Upper lobe of right lung (tissue), 1 donor: ENCODE measurements at regions of chr4 and their contacts with region 1.

Region 1: DNA sequence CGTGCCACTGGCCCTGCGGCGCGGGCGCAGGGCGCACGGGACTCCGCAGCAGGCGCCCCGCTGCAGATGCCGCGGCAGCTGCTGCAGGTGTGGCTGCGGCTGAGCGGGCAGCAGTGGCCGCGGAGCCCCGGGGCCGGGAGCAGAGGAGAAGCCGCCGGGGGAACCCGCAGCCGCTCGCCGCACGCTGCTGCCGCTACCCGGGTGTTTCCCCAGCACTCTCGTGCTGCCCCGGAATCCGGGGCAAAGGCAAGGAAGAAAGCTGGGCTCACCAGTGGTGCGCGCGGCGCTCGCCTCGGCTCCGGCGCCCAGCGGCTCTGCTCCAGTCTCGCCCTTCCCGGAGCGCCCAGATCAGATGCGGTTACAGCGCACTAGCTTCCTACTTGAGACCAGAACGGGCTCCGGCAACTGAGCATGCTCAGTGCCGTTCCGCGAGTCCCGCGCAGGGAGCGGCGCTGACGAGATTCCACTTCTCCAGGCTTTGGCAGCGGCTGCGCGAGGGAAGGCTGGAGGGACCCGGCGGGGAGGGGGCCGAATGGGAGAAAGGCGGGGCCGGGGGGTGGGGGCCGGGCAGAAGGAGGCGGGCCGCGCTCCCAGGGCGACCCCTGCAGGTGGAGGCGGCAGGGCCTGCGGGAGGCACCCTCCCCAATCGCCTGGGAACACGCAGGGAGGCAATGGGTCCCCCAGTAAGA is at the start of gene APBB2:
- DNase-seq: peak; percentile 97
- ATAC-seq: peak; percentile 93
- H3K4me3 ChIP-seq: peak within 1 kb of the TSS; percentile 94
- H3K27ac ChIP-seq: peak within 1 kb of the TSS; percentile 92
- H3K4me1 ChIP-seq: peaks cover 16% of the 10 kb centered on the region
- H3K27me3 ChIP-seq: no peaks in the 10 kb centered on the region
- CTCF ChIP-seq: peak; percentile 90
- total RNA-seq, gene APBB2: 88.2 TPM

Region 2: GRCh38 chr4:40924096-40924792 is 290.0 kb before region 1 on chr4:
- intact Hi-C with region 1: loop called (anchors 5 kb)
- DNase-seq: peak; percentile 86
- ATAC-seq: peak; percentile 89
- H3K4me3 ChIP-seq: no peak overlapping the region
- H3K27ac ChIP-seq: peak overlapping the region; percentile 34
- H3K4me1 ChIP-seq: peaks cover 9% of the 10 kb centered on the region
- H3K27me3 ChIP-seq: no peaks in the 10 kb centered on the region
- CTCF ChIP-seq: peak; percentile 94

Region 3: DNA sequence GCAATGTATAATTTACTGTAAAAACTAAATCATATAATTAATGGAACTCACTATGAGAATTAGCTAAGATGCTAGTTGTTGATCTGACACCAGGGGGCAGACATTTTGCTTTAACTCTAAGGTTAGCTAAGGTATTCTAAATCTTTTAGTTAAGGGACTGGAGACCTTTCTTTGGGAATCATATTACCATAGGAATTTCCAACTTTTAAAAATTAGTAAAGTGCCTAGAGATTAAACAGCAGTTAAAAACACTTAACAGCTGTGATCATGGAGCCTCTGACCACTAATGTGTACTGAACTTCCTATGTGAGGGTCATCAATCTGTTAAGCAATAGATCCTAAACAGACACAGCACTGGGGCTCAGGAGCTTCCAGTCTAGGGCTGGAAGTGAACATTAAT is 237.9 kb before region 1 on chr4:
- intact Hi-C with region 1: loop called (anchors 10 kb)
- DNase-seq: no peak
- ATAC-seq: peak; percentile 69
- H3K4me3 ChIP-seq: no peak overlapping the region
- H3K27ac ChIP-seq: no peak overlapping the region
- H3K4me1 ChIP-seq: peaks cover 4% of the 10 kb centered on the region
- H3K27me3 ChIP-seq: no peaks in the 10 kb centered on the region
- CTCF ChIP-seq: peak; percentile 78

Region 4: DNA sequence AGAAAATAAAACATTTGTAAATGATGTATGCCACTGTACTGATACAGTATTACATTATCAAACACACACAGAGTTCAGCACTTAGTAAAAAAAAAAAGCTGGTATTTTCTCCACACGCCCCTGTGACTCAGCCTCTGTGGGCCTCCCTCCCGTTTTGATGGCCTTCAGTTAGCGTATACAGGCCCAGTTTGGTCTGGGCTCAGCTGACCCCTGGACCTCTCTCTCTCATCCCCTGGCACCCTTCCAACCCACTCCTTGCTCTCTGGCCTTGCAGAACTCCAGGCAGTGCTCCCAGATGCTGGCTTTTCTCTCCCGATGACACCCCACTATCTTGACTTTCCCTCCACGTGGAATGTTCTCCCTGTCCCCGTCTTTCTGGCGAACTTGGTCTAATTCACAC is 234.7 kb after region 1 on chr4:
- intact Hi-C with region 1: no loop called
- DNase-seq: no peak
- ATAC-seq: peak; percentile 36
- H3K4me3 ChIP-seq: no peak overlapping the region
- H3K27ac ChIP-seq: no peak overlapping the region
- H3K4me1 ChIP-seq: peaks cover 14% of the 10 kb centered on the region
- H3K27me3 ChIP-seq: no peaks in the 10 kb centered on the region
- CTCF ChIP-seq: no peak

Region 5: DNA sequence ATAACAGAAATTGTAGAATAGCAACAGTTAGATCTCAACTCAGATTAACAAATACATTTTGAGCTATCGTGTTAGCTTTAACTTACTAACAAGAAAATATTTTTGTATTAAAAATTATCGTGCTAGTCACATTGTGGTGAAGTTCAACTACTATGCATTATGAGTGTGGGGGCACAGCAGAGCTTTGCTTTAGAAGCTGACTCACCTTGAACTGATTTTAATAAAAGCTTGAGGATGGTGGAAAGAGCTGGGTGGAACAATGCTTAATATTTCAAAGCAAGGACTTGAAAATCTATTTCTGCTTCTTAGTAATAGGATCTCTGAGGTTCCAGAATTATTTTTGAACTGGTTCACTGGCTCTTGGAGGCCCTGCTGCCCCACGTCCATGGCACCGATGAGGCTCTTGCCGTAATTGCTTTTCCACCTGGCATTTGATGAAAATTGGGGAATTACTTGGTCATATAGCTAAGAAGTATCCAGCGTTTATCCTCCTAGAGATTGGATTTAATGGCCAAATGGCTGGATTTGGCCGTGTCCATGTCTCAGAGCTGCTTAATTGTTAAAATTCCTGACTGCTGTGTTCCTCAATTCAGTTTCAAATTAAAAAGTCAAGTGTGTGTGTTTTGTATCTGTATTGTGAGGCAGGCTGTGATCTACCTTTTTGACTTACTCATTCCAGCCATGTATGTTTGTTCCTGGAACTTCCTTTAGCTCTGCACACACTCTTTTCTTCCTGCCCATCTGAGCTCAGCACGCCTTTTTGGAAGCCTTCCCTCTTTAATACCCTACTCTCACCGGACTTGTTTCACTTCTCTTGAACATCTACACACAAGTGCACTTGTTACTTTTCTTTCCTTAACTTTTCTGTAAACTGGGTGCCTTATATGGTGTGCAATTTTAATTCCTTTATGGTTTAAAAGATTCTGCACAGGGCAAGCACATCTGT is 257.1 kb after region 1 on chr4:
- intact Hi-C with region 1: no loop called
- DNase-seq: no peak
- ATAC-seq: peak; percentile 61
- H3K4me3 ChIP-seq: no peak overlapping the region
- H3K27ac ChIP-seq: no peak overlapping the region
- H3K4me1 ChIP-seq: peaks cover 6% of the 10 kb centered on the region
- H3K27me3 ChIP-seq: no peaks in the 10 kb centered on the region
- CTCF ChIP-seq: no peak